Activated CD4-positive, alpha-beta memory T cell treated with anti-CD3 and anti-CD28 coated beads, Interleukin-2, amount 10 ng/mL, durations not matched to agents 7 days and 5 days (primary cell): ENCODE measurements at regions of chr17 and their contacts with region 1.

Region 1: GRCh38 chr17:39621523-39622379 is 5.0 kb upstream of the PPP1R1B start:
- DNase-seq: peak; percentile 92
- H3K4me3 Mint-ChIP-seq: peak overlapping the region; percentile 72
- H3K27ac Mint-ChIP-seq: peak overlapping the region; percentile 89
- H3K4me1 Mint-ChIP-seq: peaks cover 27% of the 10 kb centered on the region
- H3K27me3 Mint-ChIP-seq: peaks cover 49% of the 10 kb centered on the region

Region 2: GRCh38 chr17:39461926-39462569 is 159.7 kb before region 1 on chr17:
- CTCF ChIA-PET with region 1: no interaction called
- POLR2A ChIA-PET with region 1: no interaction called
- DNase-seq: peak; percentile 41
- H3K4me3 Mint-ChIP-seq: peak overlapping the region; percentile 87
- H3K27ac Mint-ChIP-seq: peak overlapping the region; percentile 93
- H3K4me1 Mint-ChIP-seq: peaks cover 31% of the 10 kb centered on the region
- H3K27me3 Mint-ChIP-seq: no peaks in the 10 kb centered on the region

Region 3: GRCh38 chr17:39636927-39637736 is 15.4 kb after region 1 on chr17 and contains the start of gene STARD3:
- CTCF ChIA-PET with region 1: interaction called, 151 read pairs
- POLR2A ChIA-PET with region 1: interaction called, 7 read pairs
- DNase-seq: peak; percentile 93
- H3K4me3 Mint-ChIP-seq: peak within 1 kb of the TSS; percentile 88
- H3K27ac Mint-ChIP-seq: peak within 1 kb of the TSS; percentile 70
- H3K4me1 Mint-ChIP-seq: peaks cover 50% of the 10 kb centered on the region
- H3K27me3 Mint-ChIP-seq: no peaks in the 10 kb centered on the region
- total RNA-seq, gene STARD3: 72.0 to 73.7 TPM

Region 4: GRCh38 chr17:39653662-39654331 is 32.0 kb after region 1 on chr17:
- CTCF ChIA-PET with region 1: interaction called, 27 read pairs
- POLR2A ChIA-PET with region 1: no interaction called
- DNase-seq: peak; percentile 85
- H3K4me3 Mint-ChIP-seq: no peak overlapping the region
- H3K27ac Mint-ChIP-seq: no peak overlapping the region
- H3K4me1 Mint-ChIP-seq: peaks cover 17% of the 10 kb centered on the region
- H3K27me3 Mint-ChIP-seq: no peaks in the 10 kb centered on the region

Region 5: DNA sequence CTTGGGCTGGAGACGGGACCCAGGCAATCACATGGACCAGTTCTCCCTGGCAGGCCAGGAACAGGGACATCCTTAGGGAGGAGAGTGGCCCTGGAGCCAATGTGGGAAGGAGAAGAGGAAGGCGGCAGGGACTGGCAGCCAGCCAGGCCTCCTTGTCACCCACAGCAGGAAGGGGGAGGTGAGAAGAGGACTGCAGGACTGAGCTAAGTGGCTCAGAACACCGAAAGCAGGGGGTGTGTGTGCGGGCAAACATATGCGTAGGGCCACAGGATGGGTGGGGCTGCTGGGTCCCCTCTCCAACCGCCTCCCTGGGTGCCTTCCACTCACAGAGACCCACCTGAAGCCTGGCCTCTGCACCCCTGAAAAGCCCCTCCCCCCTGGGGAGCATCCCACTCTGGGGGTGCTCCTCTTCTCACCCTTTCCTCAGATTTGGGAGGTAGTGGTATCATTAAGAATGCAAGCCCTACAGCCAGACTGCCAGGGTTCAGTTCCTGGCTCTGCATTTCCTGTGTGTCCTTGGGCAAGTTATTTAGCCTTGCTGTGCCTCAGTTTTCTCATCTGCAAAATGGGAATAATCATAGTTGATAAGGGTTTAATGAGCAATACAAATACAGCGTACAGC is 54.6 kb after region 1 on chr17:
- CTCF ChIA-PET with region 1: interaction called, 14 read pairs
- POLR2A ChIA-PET with region 1: no interaction called
- DNase-seq: peak; percentile 74
- H3K4me3 Mint-ChIP-seq: no peak overlapping the region
- H3K27ac Mint-ChIP-seq: peak overlapping the region; percentile 77
- H3K4me1 Mint-ChIP-seq: peaks cover 58% of the 10 kb centered on the region
- H3K27me3 Mint-ChIP-seq: peaks cover 2% of the 10 kb centered on the region

Region 6: GRCh38 chr17:39754161-39754951 is 132.6 kb after region 1 on chr17:
- CTCF ChIA-PET with region 1: interaction called, 51 read pairs
- POLR2A ChIA-PET with region 1: interaction called, 17 read pairs
- DNase-seq: peak; percentile 99
- H3K4me3 Mint-ChIP-seq: peak overlapping the region; percentile 77
- H3K27ac Mint-ChIP-seq: peak overlapping the region; percentile 67
- H3K4me1 Mint-ChIP-seq: peaks cover 59% of the 10 kb centered on the region
- H3K27me3 Mint-ChIP-seq: no peaks in the 10 kb centered on the region

Region 7: DNA sequence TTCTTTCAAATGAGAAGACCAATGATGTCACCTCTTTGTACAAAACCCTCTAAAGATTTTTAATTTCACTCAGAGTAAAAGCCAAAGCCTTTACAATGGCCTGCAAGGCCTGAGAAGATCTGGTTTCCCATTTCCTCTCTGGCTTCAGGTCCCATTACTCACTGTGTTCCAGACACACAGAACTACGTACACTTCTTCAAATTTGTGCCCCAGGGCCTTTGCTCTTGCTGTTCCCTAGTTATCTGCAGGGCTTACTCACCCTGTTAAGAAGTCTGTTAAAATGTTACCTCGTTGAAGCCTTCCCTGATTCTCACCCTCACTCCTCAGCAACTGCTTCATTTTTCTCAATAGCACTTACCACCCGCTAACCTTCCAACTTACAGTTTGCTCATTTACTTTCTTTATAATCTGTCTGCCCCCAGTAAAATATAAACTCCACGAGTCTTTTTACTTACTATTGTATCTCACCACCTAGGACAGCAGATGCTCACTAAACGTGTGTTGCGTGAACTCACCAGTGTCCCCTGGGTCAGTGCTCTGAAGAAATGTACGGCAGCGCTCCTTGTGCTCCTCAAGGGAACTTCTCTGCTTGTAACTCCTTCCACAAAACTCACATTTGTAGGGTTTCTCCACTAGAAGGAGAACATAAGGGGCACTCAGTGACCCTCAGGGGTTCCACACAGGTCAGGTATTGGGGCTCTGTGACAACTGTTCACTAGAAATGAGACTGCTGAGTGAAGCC is 166.2 kb after region 1 on chr17:
- CTCF ChIA-PET with region 1: no interaction called
- POLR2A ChIA-PET with region 1: no interaction called
- DNase-seq: no peak
- H3K4me3 Mint-ChIP-seq: no peak overlapping the region
- H3K27ac Mint-ChIP-seq: no peak overlapping the region
- H3K4me1 Mint-ChIP-seq: peaks cover 63% of the 10 kb centered on the region
- H3K27me3 Mint-ChIP-seq: no peaks in the 10 kb centered on the region